Esophagus muscularis mucosa (tissue), 4 donors: ENCODE measurements at regions of chr15 and their contacts with region 1.

Region 1: DNA sequence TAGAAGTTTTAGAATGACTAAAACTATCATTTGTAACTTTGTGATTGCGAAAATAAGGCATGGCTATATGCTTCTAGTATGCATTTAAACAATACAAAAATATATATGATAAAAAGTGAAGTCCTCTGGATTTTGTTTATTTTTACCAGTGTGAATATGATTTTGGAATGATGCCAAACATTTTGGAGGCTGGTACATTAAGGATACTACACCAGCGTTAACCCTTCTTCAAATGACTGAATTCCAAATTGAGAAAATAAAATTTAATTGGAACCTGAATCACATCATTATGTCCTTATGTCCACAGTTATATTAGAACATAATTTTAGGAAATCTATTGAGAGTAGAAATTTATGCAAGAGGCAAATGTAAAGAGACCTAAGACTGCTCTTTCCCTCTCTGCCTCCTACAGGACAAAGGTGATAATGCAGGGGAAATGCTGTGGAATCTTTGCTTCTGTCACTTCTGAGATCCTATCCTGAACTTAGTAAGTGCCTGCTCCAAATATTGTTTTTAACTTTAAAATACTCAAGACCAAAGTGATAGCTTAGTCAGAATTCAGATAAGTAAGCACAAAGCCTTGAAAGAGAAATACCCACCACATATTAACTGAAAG is 121.1 kb upstream of the NANOGP8 start:
- DNase-seq: no peak
- H3K4me3 ChIP-seq: no peak overlapping the region
- H3K27ac ChIP-seq: no peak overlapping the region
- H3K4me1 ChIP-seq: peaks cover 0 to 8% (median under 1%) of the 10 kb centered on the region in 4 donors
- H3K27me3 ChIP-seq: no peaks in the 10 kb centered on the region
- CTCF ChIP-seq: peak in 1 of 3 experiments; percentile 10
- EP300 ChIP-seq: no peak
- POLR2A ChIP-seq: no peak

Region 2: GRCh38 chr15:35256551-35256950 is 50.4 kb after region 1 on chr15:
- intact Hi-C with region 1: loop called (anchors 10 kb)
- DNase-seq: no peak
- H3K4me3 ChIP-seq: no peak overlapping the region
- H3K27ac ChIP-seq: no peak overlapping the region
- H3K4me1 ChIP-seq: no peaks in the 10 kb centered on the region
- H3K27me3 ChIP-seq: no peaks in the 10 kb centered on the region
- CTCF ChIP-seq: no peak
- EP300 ChIP-seq: no peak
- POLR2A ChIP-seq: no peak